ENCODE measurements at regions of chr11 and their contacts with region 1.

Region 1: DNA sequence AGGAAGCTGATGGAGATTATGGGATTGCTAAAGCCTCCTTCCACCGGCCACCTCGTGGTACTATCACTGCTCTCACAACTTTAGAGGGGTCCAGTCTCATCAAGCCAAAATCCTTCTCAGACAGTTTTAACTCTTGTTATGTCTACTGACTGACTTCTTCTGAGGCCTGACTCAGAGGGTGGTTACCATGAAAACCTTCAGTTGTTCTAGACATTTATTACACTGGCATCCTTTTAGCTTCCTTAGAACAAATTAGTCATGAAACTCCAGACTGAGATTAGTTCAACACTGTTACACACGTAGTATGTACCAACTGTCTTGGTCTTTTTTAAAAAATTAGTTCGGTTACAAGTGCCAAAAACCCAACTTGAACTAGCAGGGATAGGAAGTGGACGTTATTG is 7.5 kb downstream of the DIXDC1 start:
- DNase-seq: peak in 1 of 2 experiments; percentile 57
- ATAC-seq: peak; percentile 72 to 76
- H3K4me3 ChIP-seq: no peak overlapping the region
- H3K27ac ChIP-seq: peak overlapping the region; percentile 83 to 85
- H3K4me1 ChIP-seq: peaks cover 54% of the 10 kb centered on the region
- CTCF ChIP-seq: no peak
- EP300 ChIP-seq: 0 out of 5 replicates have a peak, but pooled peaks of 1 of the 2 experiments have one; percentile 16
- POLR2A ChIP-seq: no peak
- RAD21 ChIP-seq: no peak

Region 2: GRCh38 chr11:111932611-111932950 is 12.1 kb before region 1 on chr11:
- CTCF ChIA-PET with region 1: interaction called, 19 read pairs
- POLR2A ChIA-PET with region 1: no interaction called
- DNase-seq: no peak
- ATAC-seq: no peak
- H3K4me3 ChIP-seq: no peak overlapping the region
- H3K27ac ChIP-seq: no peak overlapping the region; a peak in 1 of 6 replicates
- H3K4me1 ChIP-seq: peaks cover 35% of the 10 kb centered on the region
- CTCF ChIP-seq: no peak
- EP300 ChIP-seq: no peak
- POLR2A ChIP-seq: no peak
- RAD21 ChIP-seq: no peak

Region 3: GRCh38 chr11:111967649-111968048 is 23.0 kb after region 1 on chr11:
- CTCF ChIA-PET with region 1: no interaction called
- POLR2A ChIA-PET with region 1: no interaction called
- DNase-seq: no peak
- ATAC-seq: no peak
- H3K4me3 ChIP-seq: no peak overlapping the region
- H3K27ac ChIP-seq: no peak overlapping the region
- H3K4me1 ChIP-seq: no peaks in the 10 kb centered on the region
- CTCF ChIP-seq: no peak
- EP300 ChIP-seq: no peak
- POLR2A ChIP-seq: no peak
- RAD21 ChIP-seq: no peak